ENCODE measurements at regions of chr1 and their contacts with region 1.

Region 1: DNA sequence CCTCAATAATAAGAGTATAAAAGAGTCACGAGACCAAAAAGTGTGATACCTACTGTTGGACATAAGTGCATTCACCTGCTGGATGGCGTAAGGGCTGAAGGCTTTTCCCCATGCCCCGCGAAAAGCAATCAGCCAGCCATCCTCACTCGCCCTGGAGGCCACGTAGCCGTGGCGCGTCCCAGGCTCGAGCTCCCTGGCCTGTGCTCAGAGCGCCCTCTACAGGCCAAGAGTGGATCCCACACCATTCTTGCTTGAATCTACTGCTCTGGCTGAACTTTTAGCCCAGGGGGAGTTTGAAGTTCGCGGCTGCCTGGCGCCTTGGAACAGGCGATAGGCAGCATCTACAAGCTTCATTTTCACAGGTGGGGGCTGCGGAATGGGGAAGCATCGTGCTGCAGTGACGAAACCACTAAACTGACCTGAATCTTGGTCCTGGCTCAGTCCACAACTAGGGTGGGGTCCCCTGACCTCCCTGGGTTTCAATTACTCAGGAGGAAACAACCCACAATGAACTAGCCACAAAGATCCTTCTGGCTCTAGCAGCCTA is 70.3 kb upstream of the SERBP1 start:
- DNase-seq: peak; percentile 83 to 94 (median 91)
- H3K4me3 ChIP-seq: peak overlapping the region in 1 of 7 experiments; percentile 27
- H3K27ac ChIP-seq: no peak overlapping the region
- H3K4me1 ChIP-seq: peaks cover 0 to 4% (median 1%) of the 10 kb centered on the region in 4 experiments
- H3K27me3 ChIP-seq: no peaks in the 10 kb centered on the region

Region 2: DNA sequence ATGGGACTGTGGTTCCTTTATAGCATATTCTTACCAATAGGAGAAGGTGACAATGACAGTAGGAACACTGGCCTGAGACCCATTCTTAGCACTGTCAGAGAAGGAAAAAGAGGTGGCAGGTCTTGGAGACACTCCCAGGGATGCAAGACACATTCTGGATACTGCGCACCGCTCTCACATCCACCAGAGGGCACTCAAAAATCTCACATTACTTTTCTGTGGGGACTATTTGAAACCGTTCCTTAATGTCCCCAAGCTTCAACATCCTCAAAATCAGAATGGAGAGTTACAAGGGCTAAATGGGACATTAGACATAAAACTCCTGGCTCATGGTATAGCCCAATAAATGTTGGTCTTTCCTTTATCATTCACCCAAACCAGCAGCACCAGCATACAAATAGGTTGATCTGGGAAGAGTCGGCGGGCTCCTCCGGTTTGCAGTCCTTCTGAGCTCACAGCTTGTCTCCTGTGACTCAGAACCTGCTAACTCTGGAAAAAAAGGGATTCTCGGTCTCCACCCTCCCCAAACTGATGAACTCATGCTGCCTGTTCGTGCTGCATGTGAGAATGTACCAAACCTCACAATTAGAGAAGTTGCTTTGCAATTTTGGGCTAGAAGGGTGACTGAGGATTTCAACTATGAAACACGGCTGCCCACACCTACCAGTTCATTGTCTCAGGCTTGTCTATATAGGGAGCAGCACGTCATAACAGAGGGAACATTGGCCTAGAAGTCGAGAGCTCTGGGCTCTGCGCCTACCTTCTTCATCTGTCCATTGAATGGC is 152.6 kb before region 1 on chr1:
- CTCF ChIA-PET with region 1: interaction called, 40 read pairs
- POLR2A ChIA-PET with region 1: no interaction called
- DNase-seq: peak; percentile 26 to 59 (median 56)
- H3K4me3 ChIP-seq: no peak overlapping the region
- H3K27ac ChIP-seq: no peak overlapping the region
- H3K4me1 ChIP-seq: no peaks in the 10 kb centered on the region
- H3K27me3 ChIP-seq: no peaks in the 10 kb centered on the region

Region 3: DNA sequence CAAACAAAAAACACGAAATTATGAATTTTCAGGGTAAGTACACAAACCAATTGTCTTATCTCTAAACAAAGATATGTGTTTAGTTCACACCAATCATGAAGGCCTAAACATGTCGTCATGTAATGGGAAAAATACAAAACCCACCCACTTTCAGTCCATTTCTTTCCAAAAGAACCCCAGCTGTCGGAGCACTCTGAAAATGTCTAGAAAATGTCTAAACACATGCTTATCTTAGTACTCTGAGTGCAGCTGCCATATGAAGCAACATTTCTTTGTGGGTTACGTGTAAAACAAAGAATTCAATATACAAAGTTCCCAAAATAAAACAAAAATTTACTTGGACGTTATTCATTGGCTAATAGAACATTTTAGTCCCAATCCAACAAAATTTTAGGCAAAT is 93.0 kb before region 1 on chr1:
- CTCF ChIA-PET with region 1: no interaction called
- POLR2A ChIA-PET with region 1: no interaction called
- DNase-seq: no peak
- H3K4me3 ChIP-seq: no peak overlapping the region
- H3K27ac ChIP-seq: no peak overlapping the region
- H3K4me1 ChIP-seq: no peaks in the 10 kb centered on the region
- H3K27me3 ChIP-seq: no peaks in the 10 kb centered on the region

Region 4: GRCh38 chr1:67430352-67431155 is 69.9 kb before region 1 on chr1 and contains the start of gene SERBP1:
- CTCF ChIA-PET with region 1: interaction called, 10 read pairs
- POLR2A ChIA-PET with region 1: no interaction called
- DNase-seq: peak; percentile 98 to 99 (median 98)
- H3K4me3 ChIP-seq: peak within 1 kb of the TSS; percentile 79 to 98 (median 95)
- H3K27ac ChIP-seq: peak within 1 kb of the TSS; percentile 80 to 92
- H3K4me1 ChIP-seq: peaks cover 23 to 60% (median 38%) of the 10 kb centered on the region in 4 experiments
- H3K27me3 ChIP-seq: no peaks in the 10 kb centered on the region

Region 5: GRCh38 chr1:67489643-67490042 is 10.8 kb before region 1 on chr1:
- CTCF ChIA-PET with region 1: interaction called, 27 read pairs
- POLR2A ChIA-PET with region 1: no interaction called
- DNase-seq: peak; percentile 53 to 70 (median 69)
- H3K4me3 ChIP-seq: no peak overlapping the region
- H3K27ac ChIP-seq: no peak overlapping the region
- H3K4me1 ChIP-seq: no peaks in the 10 kb centered on the region
- H3K27me3 ChIP-seq: no peaks in the 10 kb centered on the region

Measured in common myeloid progenitor, CD34-positive (primary cell).